CD4-positive, alpha-beta T cell (primary cell): ENCODE measurements at regions of chr19 and their contacts with region 1.

Region 1: GRCh38 chr19:52048555-52049501 is at the start of gene ZNF432:
- DNase-seq: peak; percentile 74 to 91 (median 80)
- ATAC-seq: peak; percentile 85
- H3K4me3 ChIP-seq: peak within 1 kb of the TSS; percentile 79
- H3K4me3 Mint-ChIP-seq: peak within 1 kb of the TSS; percentile 98
- H3K27ac ChIP-seq: peak within 1 kb of the TSS; percentile 89 to 95
- H3K27ac Mint-ChIP-seq: peak within 1 kb of the TSS; percentile 97
- H3K4me1 ChIP-seq: peaks cover 5% of the 10 kb centered on the region
- H3K4me1 Mint-ChIP-seq: peaks cover 37% of the 10 kb centered on the region
- H3K27me3 ChIP-seq: no peaks in the 10 kb centered on the region
- H3K27me3 Mint-ChIP-seq: no peaks in the 10 kb centered on the region
- CTCF ChIP-seq: no peak
- total RNA-seq, gene ZNF432: 16.3 to 19.2 TPM

Region 2: GRCh38 chr19:51904331-51905165 is 144.3 kb before region 1 on chr19 and contains the start of gene ZNF649:
- CTCF ChIA-PET with region 1: no interaction called
- POLR2A ChIA-PET with region 1: interaction called, 7 read pairs
- intact Hi-C with region 1: loop called in 1 of 2 experiments (anchors 5 kb)
- DNase-seq: peak; percentile 69 to 90 (median 74)
- ATAC-seq: peak; percentile 91
- H3K4me3 ChIP-seq: peak within 1 kb of the TSS; percentile 92
- H3K4me3 Mint-ChIP-seq: peak within 1 kb of the TSS; percentile 100
- H3K27ac ChIP-seq: peak within 1 kb of the TSS; percentile 53 to 58
- H3K27ac Mint-ChIP-seq: peak within 1 kb of the TSS; percentile 89
- H3K4me1 ChIP-seq: peaks cover 14% of the 10 kb centered on the region
- H3K4me1 Mint-ChIP-seq: peaks cover 29% of the 10 kb centered on the region
- H3K27me3 ChIP-seq: peaks cover 6 to 9% of the 10 kb centered on the region in 2 experiments
- H3K27me3 Mint-ChIP-seq: peaks cover 36% of the 10 kb centered on the region
- CTCF ChIP-seq: no peak
- total RNA-seq, gene ZNF649: 13.0 to 13.2 TPM

Region 3: GRCh38 chr19:51971624-51972023 is 77.2 kb before region 1 on chr19:
- CTCF ChIA-PET with region 1: no interaction called
- POLR2A ChIA-PET with region 1: no interaction called
- intact Hi-C with region 1: no loop called
- DNase-seq: peak in 5 of 14 experiments; percentile 8 to 39 (median 16)
- ATAC-seq: no peak
- H3K4me3 ChIP-seq: no peak overlapping the region
- H3K4me3 Mint-ChIP-seq: no peak overlapping the region
- H3K27ac ChIP-seq: no peak overlapping the region
- H3K27ac Mint-ChIP-seq: no peak overlapping the region
- H3K4me1 ChIP-seq: no peaks in the 10 kb centered on the region
- H3K4me1 Mint-ChIP-seq: no peaks in the 10 kb centered on the region
- H3K27me3 ChIP-seq: no peaks in the 10 kb centered on the region
- H3K27me3 Mint-ChIP-seq: no peaks in the 10 kb centered on the region
- CTCF ChIP-seq: no peak

Region 4: GRCh38 chr19:52007806-52008557 is 40.8 kb before region 1 on chr19 and contains the start of gene ZNF615:
- CTCF ChIA-PET with region 1: no interaction called
- POLR2A ChIA-PET with region 1: interaction called, 25 read pairs
- intact Hi-C with region 1: loop called (anchors 1 to 5 kb)
- DNase-seq: peak; percentile 78 to 92 (median 82)
- ATAC-seq: peak; percentile 91
- H3K4me3 ChIP-seq: peak within 1 kb of the TSS; percentile 95
- H3K4me3 Mint-ChIP-seq: peak within 1 kb of the TSS; percentile 95
- H3K27ac ChIP-seq: peak within 1 kb of the TSS; percentile 82 to 88
- H3K27ac Mint-ChIP-seq: peak within 1 kb of the TSS; percentile 88
- H3K4me1 ChIP-seq: peaks cover 12% of the 10 kb centered on the region
- H3K4me1 Mint-ChIP-seq: peaks cover 24% of the 10 kb centered on the region
- H3K27me3 ChIP-seq: no peaks in the 10 kb centered on the region
- H3K27me3 Mint-ChIP-seq: no peaks in the 10 kb centered on the region
- CTCF ChIP-seq: no peak
- total RNA-seq, gene ZNF615: 8.9 to 9.2 TPM

Region 5: DNA sequence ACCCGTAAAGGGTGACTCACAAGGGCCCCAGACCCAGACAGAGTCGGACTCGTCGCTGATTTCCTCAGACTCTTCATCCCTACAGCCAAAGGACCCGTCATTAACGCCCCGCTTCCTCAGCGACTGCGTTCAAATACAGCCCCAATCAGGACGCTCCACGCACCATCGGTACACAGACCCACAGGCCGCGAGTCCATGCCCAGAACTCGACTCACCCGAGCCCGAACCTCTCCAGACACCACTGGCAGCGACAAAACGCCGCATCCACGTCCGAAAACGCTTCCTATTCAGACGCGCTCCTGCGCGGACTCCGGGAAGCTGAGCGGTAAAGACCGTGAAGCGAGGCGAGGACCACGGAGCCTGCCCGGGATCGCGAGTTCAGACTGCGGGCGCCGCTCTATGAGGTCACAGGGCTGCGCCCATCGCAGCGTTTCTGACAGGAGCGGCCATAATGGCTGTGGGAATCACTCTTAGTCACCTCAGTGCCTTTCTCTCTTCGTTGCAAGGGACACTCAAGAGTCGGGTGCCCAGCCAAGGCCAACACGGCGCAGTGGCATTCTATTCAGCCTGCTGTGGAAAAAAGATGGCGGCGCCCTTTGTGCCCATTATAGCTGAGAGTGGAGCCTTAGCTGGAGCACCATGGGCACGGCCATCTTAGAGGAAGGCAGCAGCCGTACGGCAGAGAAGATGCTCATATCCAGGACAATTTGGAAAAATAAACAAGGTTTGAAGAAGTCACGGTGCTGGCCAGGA is 20.6 kb before region 1 on chr19 and contains the start of gene ZNF614:
- CTCF ChIA-PET with region 1: no interaction called
- POLR2A ChIA-PET with region 1: interaction called, 37 read pairs
- intact Hi-C with region 1: loop called (anchors 1 kb)
- DNase-seq: peak; percentile 71 to 92 (median 82)
- ATAC-seq: peak; percentile 85
- H3K4me3 ChIP-seq: peak within 1 kb of the TSS; percentile 85
- H3K4me3 Mint-ChIP-seq: peak within 1 kb of the TSS; percentile 95
- H3K27ac ChIP-seq: peak within 1 kb of the TSS; percentile 89 to 90
- H3K27ac Mint-ChIP-seq: peak within 1 kb of the TSS; percentile 93
- H3K4me1 ChIP-seq: peaks cover 16% of the 10 kb centered on the region
- H3K4me1 Mint-ChIP-seq: peaks cover 38% of the 10 kb centered on the region
- H3K27me3 ChIP-seq: no peaks in the 10 kb centered on the region
- H3K27me3 Mint-ChIP-seq: no peaks in the 10 kb centered on the region
- CTCF ChIP-seq: no peak
- total RNA-seq, gene ZNF614: 9.7 to 10.5 TPM

Region 6: GRCh38 chr19:52095172-52096014 is 46.6 kb after region 1 on chr19 and contains the start of gene ZNF841:
- CTCF ChIA-PET with region 1: no interaction called
- POLR2A ChIA-PET with region 1: no interaction called
- intact Hi-C with region 1: loop called in 1 of 2 experiments (anchors 10 kb)
- DNase-seq: peak; percentile 69 to 90 (median 78)
- ATAC-seq: peak; percentile 96
- H3K4me3 ChIP-seq: peak within 1 kb of the TSS; percentile 77
- H3K4me3 Mint-ChIP-seq: peak within 1 kb of the TSS; percentile 99
- H3K27ac ChIP-seq: peak within 1 kb of the TSS in 1 of 2 donors; percentile 58
- H3K27ac Mint-ChIP-seq: peak within 1 kb of the TSS; percentile 95
- H3K4me1 ChIP-seq: peaks cover 16% of the 10 kb centered on the region
- H3K4me1 Mint-ChIP-seq: peaks cover 40% of the 10 kb centered on the region
- H3K27me3 ChIP-seq: no peaks in the 10 kb centered on the region
- H3K27me3 Mint-ChIP-seq: no peaks in the 10 kb centered on the region
- CTCF ChIP-seq: no peak
- total RNA-seq, gene ZNF841: 20.0 TPM